ENCODE measurements at regions of chr9 and their contacts with region 1.

Region 1: GRCh38 chr9:21576331-21577189 is 94.4 kb upstream of the IFNE start:
- DNase-seq: peak; percentile 71
- H3K4me3 Mint-ChIP-seq: no peak overlapping the region
- H3K27ac Mint-ChIP-seq: peak overlapping the region; percentile 8
- H3K4me1 Mint-ChIP-seq: peaks cover 32% of the 10 kb centered on the region
- H3K27me3 Mint-ChIP-seq: peaks cover 3% of the 10 kb centered on the region

Region 2: DNA sequence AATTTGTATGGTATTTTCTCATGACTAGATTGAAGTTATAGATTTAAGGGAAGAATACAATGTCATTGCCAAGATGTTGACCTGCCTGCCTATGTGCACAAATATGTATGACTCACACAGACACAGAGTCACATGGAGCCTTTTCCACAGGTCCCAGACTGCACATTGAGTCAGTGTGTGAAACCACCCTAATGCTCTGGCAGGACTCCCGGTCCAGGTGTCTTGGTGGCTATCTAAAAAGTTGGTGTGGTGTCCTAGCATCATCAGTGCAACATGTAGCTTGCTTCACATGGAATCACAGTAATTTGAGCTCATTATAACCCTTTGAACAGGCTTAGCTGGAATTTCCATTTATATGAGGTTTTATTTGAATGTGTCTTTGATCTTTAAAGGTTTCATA is 282.2 kb before region 1 on chr9:
- CTCF ChIA-PET with region 1: no interaction called
- POLR2A ChIA-PET with region 1: no interaction called
- intact Hi-C with region 1: no loop called
- DNase-seq: no peak
- H3K4me3 Mint-ChIP-seq: no peak overlapping the region
- H3K27ac Mint-ChIP-seq: no peak overlapping the region
- H3K4me1 Mint-ChIP-seq: peaks cover 2% of the 10 kb centered on the region
- H3K27me3 Mint-ChIP-seq: peaks cover 14% of the 10 kb centered on the region

Region 3: GRCh38 chr9:21357479-21358460 is 218.8 kb before region 1 on chr9:
- CTCF ChIA-PET with region 1: no interaction called
- POLR2A ChIA-PET with region 1: no interaction called
- intact Hi-C with region 1: loop called (anchors 10 kb)
- DNase-seq: peak; percentile 30
- H3K4me3 Mint-ChIP-seq: peak overlapping the region; percentile 3
- H3K27ac Mint-ChIP-seq: no peak overlapping the region
- H3K4me1 Mint-ChIP-seq: peaks cover 20% of the 10 kb centered on the region
- H3K27me3 Mint-ChIP-seq: peaks cover 38% of the 10 kb centered on the region

Region 4: GRCh38 chr9:21591221-21592062 is 14.9 kb after region 1 on chr9:
- CTCF ChIA-PET with region 1: no interaction called
- POLR2A ChIA-PET with region 1: no interaction called
- intact Hi-C with region 1: loop called (anchors 1 kb)
- DNase-seq: peak; percentile 80
- H3K4me3 Mint-ChIP-seq: no peak overlapping the region
- H3K27ac Mint-ChIP-seq: no peak overlapping the region
- H3K4me1 Mint-ChIP-seq: peaks cover 15% of the 10 kb centered on the region
- H3K27me3 Mint-ChIP-seq: no peaks in the 10 kb centered on the region

Region 5: GRCh38 chr9:21761309-21761901 is 184.8 kb after region 1 on chr9:
- CTCF ChIA-PET with region 1: no interaction called
- POLR2A ChIA-PET with region 1: no interaction called
- intact Hi-C with region 1: loop called (anchors 5 kb)
- DNase-seq: peak; percentile 42
- H3K4me3 Mint-ChIP-seq: no peak overlapping the region
- H3K27ac Mint-ChIP-seq: no peak overlapping the region
- H3K4me1 Mint-ChIP-seq: peaks cover 10% of the 10 kb centered on the region
- H3K27me3 Mint-ChIP-seq: peaks cover 40% of the 10 kb centered on the region

Region 6: DNA sequence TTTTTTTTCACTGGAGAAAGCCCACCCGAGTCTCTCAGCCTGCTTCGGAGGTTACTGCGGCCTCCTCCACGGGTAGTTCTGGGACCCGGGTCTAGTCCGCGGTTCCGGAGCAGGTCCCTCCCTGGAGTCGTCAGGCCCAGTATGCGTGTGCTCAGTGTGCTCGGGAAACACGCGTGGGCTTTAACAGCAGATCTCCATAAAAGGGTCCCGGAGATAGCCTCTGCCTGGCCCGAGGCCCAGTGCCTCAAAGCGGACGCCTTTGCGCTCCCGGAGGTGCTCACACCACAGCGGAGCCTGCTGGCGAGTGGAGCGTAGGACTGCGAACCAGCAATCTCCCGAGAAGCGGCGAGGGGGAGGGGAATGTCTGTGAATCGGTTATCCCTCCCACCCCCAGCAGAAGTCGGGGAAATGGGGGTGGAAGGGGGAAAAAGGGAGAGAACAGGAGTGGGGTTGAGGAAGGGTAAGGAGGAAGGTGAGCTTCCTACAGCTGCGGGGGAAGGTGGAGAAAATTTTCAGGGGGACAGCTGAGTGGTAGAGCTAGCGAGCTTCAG is 388.9 kb after region 1 on chr9:
- CTCF ChIA-PET with region 1: no interaction called
- POLR2A ChIA-PET with region 1: no interaction called
- intact Hi-C with region 1: loop called (anchors 5 kb)
- DNase-seq: peak; percentile 71
- H3K4me3 Mint-ChIP-seq: peak overlapping the region; percentile 54
- H3K27ac Mint-ChIP-seq: no peak overlapping the region
- H3K4me1 Mint-ChIP-seq: peaks cover 22% of the 10 kb centered on the region
- H3K27me3 Mint-ChIP-seq: peaks cover 84% of the 10 kb centered on the region

Region 7: DNA sequence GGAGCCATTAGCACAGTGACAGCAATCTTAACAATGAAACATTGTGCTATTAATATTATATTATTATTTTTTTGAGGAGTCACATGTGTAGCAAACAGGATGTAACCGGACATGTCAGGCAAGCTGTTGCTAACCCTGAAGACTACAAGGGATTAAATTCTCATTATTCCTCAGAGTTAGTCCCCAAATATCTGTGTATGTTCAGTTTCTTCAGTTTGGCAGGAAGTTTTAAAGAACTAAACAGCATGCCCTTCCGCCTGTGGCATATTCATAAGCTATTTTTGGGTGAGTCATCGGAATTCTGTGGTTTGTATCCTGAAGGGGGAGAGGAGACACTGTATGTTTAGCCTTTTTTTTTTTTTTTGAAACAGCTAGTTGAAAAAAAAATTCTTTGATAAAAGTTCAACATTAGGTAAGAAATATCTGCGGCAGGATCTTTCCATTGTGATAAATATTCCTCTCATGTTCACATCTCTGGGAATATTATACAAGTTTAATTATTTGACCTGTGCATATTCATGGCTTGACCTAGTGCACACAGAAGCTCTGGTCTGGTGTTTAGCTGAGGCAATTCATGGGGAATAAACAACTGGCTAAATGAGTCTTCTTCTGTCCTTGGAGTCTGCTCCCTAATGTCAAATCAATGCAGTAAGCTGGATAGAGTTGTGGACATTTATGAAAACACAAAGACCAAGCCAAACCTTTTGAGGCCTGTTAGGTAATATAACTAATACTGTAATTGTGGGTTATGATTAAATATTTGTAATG is 635.2 kb after region 1 on chr9:
- CTCF ChIA-PET with region 1: no interaction called
- POLR2A ChIA-PET with region 1: no interaction called
- intact Hi-C with region 1: loop called (anchors 5 kb)
- DNase-seq: no peak
- H3K4me3 Mint-ChIP-seq: no peak overlapping the region
- H3K27ac Mint-ChIP-seq: no peak overlapping the region
- H3K4me1 Mint-ChIP-seq: peaks cover 32% of the 10 kb centered on the region
- H3K27me3 Mint-ChIP-seq: no peaks in the 10 kb centered on the region